Activated CD8-positive, alpha-beta T cell treated with anti-CD3 and anti-CD28 coated beads for 36 hours (primary cell): ENCODE measurements at regions of chr1 and their contacts with region 1.

Region 1: DNA sequence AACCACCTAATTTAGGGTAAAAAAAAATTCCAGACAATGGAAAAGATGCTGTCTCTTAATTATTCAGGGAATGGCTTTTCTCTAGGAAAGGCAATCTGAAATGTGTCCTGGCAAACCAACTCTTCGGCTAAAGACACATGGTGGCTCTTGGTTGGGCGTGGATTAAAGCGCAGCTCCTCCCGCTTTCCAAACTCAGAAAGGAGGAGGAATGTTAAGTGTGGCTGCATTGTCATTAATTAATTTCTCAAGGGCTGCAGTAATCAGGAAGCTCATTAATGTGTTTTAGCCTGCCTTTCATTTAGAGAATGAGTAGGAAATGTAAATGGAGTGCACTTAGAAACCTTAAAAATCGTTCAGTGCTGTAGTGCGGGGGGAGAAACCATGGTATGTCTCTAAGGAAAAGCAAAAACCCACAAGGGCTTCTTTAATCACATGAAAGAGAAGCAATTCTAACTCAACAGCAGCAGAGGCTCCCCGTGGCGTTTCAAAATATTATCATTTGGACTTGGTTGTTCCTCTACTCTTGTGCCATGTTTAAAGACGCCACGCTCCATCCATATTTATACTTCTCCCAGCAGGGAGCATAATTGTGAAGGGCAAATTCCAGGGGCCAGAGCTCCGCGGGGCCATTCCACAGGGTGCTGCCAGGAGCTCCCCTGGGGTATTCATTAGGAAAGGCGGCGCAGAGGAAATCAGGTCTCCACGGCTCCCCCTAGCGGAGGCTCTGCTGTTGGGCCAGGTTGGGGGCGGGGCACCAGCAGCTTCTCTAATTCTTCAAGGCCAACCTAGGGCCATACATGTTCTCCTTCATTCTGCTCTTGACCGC is 91.9 kb upstream of the SSX2IP start:
- DNase-seq: peak; percentile 88
- ATAC-seq: peak; percentile 90
- H3K4me3 Mint-ChIP-seq: peak overlapping the region; percentile 63
- H3K27ac Mint-ChIP-seq: no peak overlapping the region
- H3K4me1 Mint-ChIP-seq: peaks cover 27% of the 10 kb centered on the region
- H3K27me3 Mint-ChIP-seq: peaks cover 4% of the 10 kb centered on the region
- CTCF ChIP-seq: peak; percentile 88

Region 2: DNA sequence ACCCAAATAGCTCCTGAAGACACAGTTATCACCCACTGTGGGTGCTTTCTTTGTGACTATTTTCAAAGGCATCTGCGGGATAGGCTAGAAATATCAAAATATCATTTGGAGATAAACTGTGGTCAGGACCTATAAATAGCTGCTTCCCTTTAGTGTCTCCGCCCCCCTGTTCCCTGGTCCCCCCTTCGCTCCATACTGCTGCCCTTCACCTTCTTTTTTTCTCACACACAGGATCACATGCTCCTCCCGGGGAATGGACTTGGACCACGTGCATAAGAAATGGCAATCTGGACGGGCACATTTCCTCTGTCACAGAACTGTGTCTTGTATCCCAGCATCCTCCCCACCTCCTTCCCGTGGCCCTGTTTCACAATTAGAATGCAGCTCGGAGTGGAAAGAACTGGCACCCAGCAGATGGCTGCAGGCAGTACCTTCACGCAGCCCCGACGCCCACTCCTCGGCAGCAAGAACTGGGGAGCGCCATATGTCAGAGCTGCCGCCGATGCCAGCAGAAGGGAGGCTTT is 23.1 kb before region 1 on chr1:
- CTCF ChIA-PET with region 1: interaction called, 13 read pairs
- POLR2A ChIA-PET with region 1: interaction called, 3 read pairs
- intact Hi-C with region 1: no loop called
- DNase-seq: peak; percentile 37
- ATAC-seq: peak; percentile 75
- H3K4me3 Mint-ChIP-seq: peak overlapping the region; percentile 23
- H3K27ac Mint-ChIP-seq: no peak overlapping the region
- H3K4me1 Mint-ChIP-seq: peaks cover 10% of the 10 kb centered on the region
- H3K27me3 Mint-ChIP-seq: peaks cover 8% of the 10 kb centered on the region
- CTCF ChIP-seq: no peak

Region 3: DNA sequence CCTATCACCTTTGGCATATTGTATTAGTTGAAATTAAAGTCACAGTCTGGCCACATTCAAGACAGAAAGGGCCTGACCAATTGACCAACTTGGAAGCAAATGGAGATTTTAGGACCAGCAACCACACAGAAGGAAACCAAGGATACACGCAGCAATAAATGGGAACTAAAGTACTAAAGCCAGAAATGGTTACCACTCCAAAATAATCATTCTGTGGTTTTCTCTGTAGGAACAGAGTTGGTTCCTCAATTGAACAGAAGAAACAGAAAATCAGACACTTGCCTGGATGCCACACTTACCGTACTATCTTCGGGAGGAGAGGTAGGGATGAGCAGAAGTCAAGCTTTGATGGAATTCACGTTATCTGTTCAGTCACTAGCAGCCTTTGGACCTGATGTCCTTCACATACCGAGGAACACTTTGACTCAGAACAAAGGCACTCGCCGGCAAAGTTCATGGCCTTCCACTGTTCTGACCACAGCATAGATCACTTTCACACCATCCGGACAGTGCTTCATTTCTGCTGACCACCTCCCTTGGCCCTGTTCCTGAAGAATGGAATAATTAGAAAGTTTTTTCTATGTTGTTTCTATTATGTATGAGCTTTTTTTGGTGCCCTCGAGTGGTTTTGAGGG is 13.9 kb after region 1 on chr1:
- CTCF ChIA-PET with region 1: interaction called, 45 read pairs
- POLR2A ChIA-PET with region 1: no interaction called
- intact Hi-C with region 1: no loop called
- DNase-seq: no peak
- ATAC-seq: no peak
- H3K4me3 Mint-ChIP-seq: no peak overlapping the region
- H3K27ac Mint-ChIP-seq: no peak overlapping the region
- H3K4me1 Mint-ChIP-seq: no peaks in the 10 kb centered on the region
- H3K27me3 Mint-ChIP-seq: peaks cover 2% of the 10 kb centered on the region
- CTCF ChIP-seq: no peak

Region 4: GRCh38 chr1:84803604-84804003 is 21.4 kb after region 1 on chr1:
- CTCF ChIA-PET with region 1: interaction called, 25 read pairs
- POLR2A ChIA-PET with region 1: no interaction called
- intact Hi-C with region 1: no loop called
- DNase-seq: no peak
- ATAC-seq: no peak
- H3K4me3 Mint-ChIP-seq: no peak overlapping the region
- H3K27ac Mint-ChIP-seq: no peak overlapping the region
- H3K4me1 Mint-ChIP-seq: no peaks in the 10 kb centered on the region
- H3K27me3 Mint-ChIP-seq: peaks cover 3% of the 10 kb centered on the region
- CTCF ChIP-seq: no peak

Region 5: DNA sequence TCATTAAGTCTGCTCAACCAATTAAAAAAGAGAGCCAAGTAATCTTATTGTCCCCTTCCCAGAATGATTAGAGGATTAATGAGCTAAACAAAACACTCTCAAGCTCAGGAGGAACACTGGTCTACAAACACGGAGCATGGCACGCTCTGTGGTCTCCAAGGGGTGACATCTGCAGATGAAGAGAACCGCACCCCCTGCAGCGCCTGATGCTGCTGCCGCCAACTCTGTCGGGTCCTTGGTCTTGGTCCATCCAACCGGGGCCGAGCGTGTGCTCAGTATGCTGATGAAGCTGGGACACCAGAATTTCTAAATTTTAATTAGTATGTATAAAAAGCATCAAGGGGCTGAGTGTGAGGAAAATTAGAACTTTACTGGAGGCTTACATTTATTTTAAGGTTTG is 28.2 kb after region 1 on chr1:
- CTCF ChIA-PET with region 1: interaction called, 25 read pairs
- POLR2A ChIA-PET with region 1: no interaction called
- intact Hi-C with region 1: no loop called
- DNase-seq: no peak
- ATAC-seq: no peak
- H3K4me3 Mint-ChIP-seq: no peak overlapping the region
- H3K27ac Mint-ChIP-seq: no peak overlapping the region
- H3K4me1 Mint-ChIP-seq: no peaks in the 10 kb centered on the region
- H3K27me3 Mint-ChIP-seq: peaks cover 3% of the 10 kb centered on the region
- CTCF ChIP-seq: no peak

Region 6: DNA sequence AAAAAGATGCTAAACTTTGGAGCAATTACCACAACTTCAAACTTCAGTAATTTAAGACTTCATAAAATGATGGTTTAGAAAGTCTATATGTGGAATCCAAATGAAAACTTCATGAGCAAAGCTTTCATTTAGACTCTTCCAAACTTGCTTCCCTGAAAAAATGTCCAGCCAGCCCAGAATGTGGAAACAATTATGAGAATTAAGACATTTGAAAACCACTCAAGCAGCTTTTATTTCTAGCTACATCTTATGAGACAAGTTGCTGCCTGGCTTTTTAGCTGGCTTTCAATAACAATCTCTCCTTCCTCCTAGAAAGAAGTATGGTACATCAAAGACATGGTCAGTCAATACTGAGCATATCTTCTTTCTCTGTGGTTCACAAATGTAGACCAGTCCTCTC is 89.0 kb after region 1 on chr1:
- CTCF ChIA-PET with region 1: no interaction called
- POLR2A ChIA-PET with region 1: no interaction called
- intact Hi-C with region 1: no loop called
- DNase-seq: no peak
- ATAC-seq: no peak
- H3K4me3 Mint-ChIP-seq: no peak overlapping the region
- H3K27ac Mint-ChIP-seq: no peak overlapping the region
- H3K4me1 Mint-ChIP-seq: peaks cover 3% of the 10 kb centered on the region
- H3K27me3 Mint-ChIP-seq: peaks cover 8% of the 10 kb centered on the region
- CTCF ChIP-seq: no peak

Region 7: GRCh38 chr1:84920159-84920558 is 138.0 kb after region 1 on chr1:
- CTCF ChIA-PET with region 1: interaction called, 16 read pairs
- POLR2A ChIA-PET with region 1: no interaction called
- intact Hi-C with region 1: no loop called
- DNase-seq: no peak
- ATAC-seq: no peak
- H3K4me3 Mint-ChIP-seq: no peak overlapping the region
- H3K27ac Mint-ChIP-seq: no peak overlapping the region
- H3K4me1 Mint-ChIP-seq: no peaks in the 10 kb centered on the region
- H3K27me3 Mint-ChIP-seq: peaks cover 3% of the 10 kb centered on the region
- CTCF ChIP-seq: no peak

Region 8: GRCh38 chr1:84936116-84936810 is 154.1 kb after region 1 on chr1:
- CTCF ChIA-PET with region 1: interaction called, 41 read pairs
- POLR2A ChIA-PET with region 1: no interaction called
- intact Hi-C with region 1: loop called (anchors 5 kb)
- DNase-seq: peak; percentile 23
- ATAC-seq: peak; percentile 77
- H3K4me3 Mint-ChIP-seq: no peak overlapping the region
- H3K27ac Mint-ChIP-seq: no peak overlapping the region
- H3K4me1 Mint-ChIP-seq: peaks cover 3% of the 10 kb centered on the region
- H3K27me3 Mint-ChIP-seq: no peaks in the 10 kb centered on the region
- CTCF ChIP-seq: peak; percentile 96

Region 9: DNA sequence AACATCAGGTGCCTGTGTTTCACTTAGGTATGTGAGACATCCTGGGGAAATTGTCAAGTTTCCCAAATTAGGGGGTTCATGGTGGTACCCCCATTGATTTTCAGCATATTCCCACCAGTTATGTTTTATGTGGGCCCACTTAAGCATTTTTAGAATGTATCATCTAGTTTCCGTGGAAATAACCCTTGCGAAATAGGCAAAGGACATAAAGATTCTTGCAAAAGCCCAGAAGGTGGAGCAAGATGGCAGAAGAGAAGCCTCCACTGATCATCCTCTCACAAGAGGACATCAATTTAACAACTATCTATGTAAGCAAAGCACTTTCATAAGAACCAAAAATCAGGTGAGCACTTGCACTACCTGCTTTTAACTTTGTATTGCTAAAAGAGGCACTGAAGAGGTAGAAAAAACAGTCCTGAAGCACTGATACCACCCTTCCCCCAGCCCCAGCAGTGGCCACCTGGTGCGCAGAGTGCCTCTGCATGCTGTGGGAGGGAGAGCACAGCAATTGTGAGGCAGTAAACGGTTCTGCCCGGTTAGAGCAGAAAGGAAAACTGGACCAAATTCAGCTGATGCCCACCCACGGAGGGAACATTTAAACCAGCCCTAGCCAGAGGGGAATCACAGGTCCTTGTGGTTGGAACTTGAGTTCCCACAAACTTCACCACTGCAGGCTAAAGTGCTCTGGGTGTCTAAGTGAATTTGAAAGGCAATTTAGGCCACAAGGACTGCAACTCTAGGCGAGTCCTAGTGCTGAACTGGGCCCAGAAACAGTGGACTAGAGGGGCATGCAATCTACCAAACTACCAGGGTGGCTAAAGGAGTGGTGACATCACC is 191.6 kb after region 1 on chr1:
- CTCF ChIA-PET with region 1: no interaction called
- POLR2A ChIA-PET with region 1: no interaction called
- intact Hi-C with region 1: no loop called
- DNase-seq: peak; percentile 34
- ATAC-seq: no peak
- H3K4me3 Mint-ChIP-seq: no peak overlapping the region
- H3K27ac Mint-ChIP-seq: peak overlapping the region; percentile 51
- H3K4me1 Mint-ChIP-seq: peaks cover 56% of the 10 kb centered on the region
- H3K27me3 Mint-ChIP-seq: peaks cover 4% of the 10 kb centered on the region
- CTCF ChIP-seq: no peak